A549 (cell line): ENCODE measurements at regions of chr7 and their contacts with region 1.

Region 1: GRCh38 chr7:156892821-156893706 is at the start of gene LMBR1:
- DNase-seq: peak; percentile 95 to 96
- ATAC-seq: peak; percentile 86 to 92
- H3K4me3 ChIP-seq: peak within 1 kb of the TSS; percentile 97
- H3K27ac ChIP-seq: peak within 1 kb of the TSS; percentile 87 to 98
- H3K4me1 ChIP-seq: peaks cover 16% of the 10 kb centered on the region
- CTCF ChIP-seq: no peak
- EP300 ChIP-seq: no peak
- POLR2A ChIP-seq: peak; percentile 88
- RAD21 ChIP-seq: no peak
- polyA plus RNA-seq, gene LMBR1: 33.2 and 39.3 TPM in 2 replicates

Region 2: GRCh38 chr7:156827587-156828203 is 65.4 kb before region 1 on chr7:
- CTCF ChIA-PET with region 1: no interaction called
- POLR2A ChIA-PET with region 1: no interaction called
- DNase-seq: peak; percentile 25 to 39
- ATAC-seq: peak in 1 of 2 experiments; percentile 53; a peak in 2 of 6 replicates
- H3K4me3 ChIP-seq: no peak overlapping the region
- H3K27ac ChIP-seq: no peak overlapping the region
- H3K4me1 ChIP-seq: peaks cover 4% of the 10 kb centered on the region; the same call in 1 of the 3 replicates
- CTCF ChIP-seq: peak; percentile 62
- EP300 ChIP-seq: no peak
- POLR2A ChIP-seq: no peak
- RAD21 ChIP-seq: peak; percentile 42 to 47; a peak in 3 of 5 replicates

Region 3: GRCh38 chr7:156906200-156906649 is 13.2 kb after region 1 on chr7:
- CTCF ChIA-PET with region 1: interaction called, 10 read pairs
- POLR2A ChIA-PET with region 1: interaction called, 5 read pairs
- DNase-seq: no peak
- ATAC-seq: no peak
- H3K4me3 ChIP-seq: no peak overlapping the region
- H3K27ac ChIP-seq: no peak overlapping the region; a peak in 1 of 6 replicates
- H3K4me1 ChIP-seq: peaks cover 13% of the 10 kb centered on the region
- CTCF ChIP-seq: no peak
- EP300 ChIP-seq: no peak
- POLR2A ChIP-seq: no peak
- RAD21 ChIP-seq: no peak

Region 4: DNA sequence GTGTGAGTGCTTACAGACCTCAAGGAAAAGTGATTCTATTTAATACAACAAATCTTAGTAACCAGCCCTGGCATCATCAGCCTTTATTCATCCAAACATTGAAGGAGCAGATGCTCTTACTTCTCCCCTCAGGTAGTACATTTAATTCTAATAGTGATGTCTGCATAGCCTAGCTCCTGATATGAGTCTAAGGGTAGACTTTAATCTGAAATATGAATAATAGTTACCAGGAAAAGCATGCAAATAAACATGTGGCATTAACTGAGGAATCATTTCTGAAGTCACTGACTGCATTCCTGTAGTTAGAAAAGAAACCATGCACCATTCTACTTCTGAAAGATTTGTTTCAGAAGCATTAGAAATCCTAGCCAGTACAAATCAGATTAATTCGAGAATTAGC is 25.6 kb after region 1 on chr7:
- CTCF ChIA-PET with region 1: no interaction called
- POLR2A ChIA-PET with region 1: no interaction called
- DNase-seq: no peak
- ATAC-seq: no peak
- H3K4me3 ChIP-seq: no peak overlapping the region
- H3K27ac ChIP-seq: no peak overlapping the region
- H3K4me1 ChIP-seq: no peaks in the 10 kb centered on the region
- CTCF ChIP-seq: no peak
- EP300 ChIP-seq: no peak
- POLR2A ChIP-seq: no peak
- RAD21 ChIP-seq: no peak